ENCODE measurements at regions of chr12 and their contacts with region 1.

Region 1: GRCh38 chr12:7638760-7639555 is 26.8 kb downstream of the APOBEC1 start:
- DNase-seq: peak; percentile 24
- ATAC-seq: peak; percentile 88
- H3K4me3 Mint-ChIP-seq: peak overlapping the region; percentile 46
- H3K27ac Mint-ChIP-seq: peak overlapping the region; percentile 15
- H3K4me1 Mint-ChIP-seq: peaks cover 21% of the 10 kb centered on the region
- H3K27me3 Mint-ChIP-seq: peaks cover 24% of the 10 kb centered on the region
- CTCF ChIP-seq: peak; percentile 91

Region 2: GRCh38 chr12:6867413-6868210 is 771.3 kb before region 1 on chr12 and contains the start of gene TPI1:
- CTCF ChIA-PET with region 1: no interaction called
- POLR2A ChIA-PET with region 1: no interaction called
- intact Hi-C with region 1: loop called (anchors 2 kb)
- DNase-seq: peak; percentile 65
- ATAC-seq: peak; percentile 78
- H3K4me3 Mint-ChIP-seq: peak within 1 kb of the TSS; percentile 89
- H3K27ac Mint-ChIP-seq: peak within 1 kb of the TSS; percentile 84
- H3K4me1 Mint-ChIP-seq: peaks cover 51% of the 10 kb centered on the region
- H3K27me3 Mint-ChIP-seq: no peaks in the 10 kb centered on the region
- CTCF ChIP-seq: no peak
- total RNA-seq, gene TPI1: 306 and 318 TPM in 2 replicates

Region 3: DNA sequence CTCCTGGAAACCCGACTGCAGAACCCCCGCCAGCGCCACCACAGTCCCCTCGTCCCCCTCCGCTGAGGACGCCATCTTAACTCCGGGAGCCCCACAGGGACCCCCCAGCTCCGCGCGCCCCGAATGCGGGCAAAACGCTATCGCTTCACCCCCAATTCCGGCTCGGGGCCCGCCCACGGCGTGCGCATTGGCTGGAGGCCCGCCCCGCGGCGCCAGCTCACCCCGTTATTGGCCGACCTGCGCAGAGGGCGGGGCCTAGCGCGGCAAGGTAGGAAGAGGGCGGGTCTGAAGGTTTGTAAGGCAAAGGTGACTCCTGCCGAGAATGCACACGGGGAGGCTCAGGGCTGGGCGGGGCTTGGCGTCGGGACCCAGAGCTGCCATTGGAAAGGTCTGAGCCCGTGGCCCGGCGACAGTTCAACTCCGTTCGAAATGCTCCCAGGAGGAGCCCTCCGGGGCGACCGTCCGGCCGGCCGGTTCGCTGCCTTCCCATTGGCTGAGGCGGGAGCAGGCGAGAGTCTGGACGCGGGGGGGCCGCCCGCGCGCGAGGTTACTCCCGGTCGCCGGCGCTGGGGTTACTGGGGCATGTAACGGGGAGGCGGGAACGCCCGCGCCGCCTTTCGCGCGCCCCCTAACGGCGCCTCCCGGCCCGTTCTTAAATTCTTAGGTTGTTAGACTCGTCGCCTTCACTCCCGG is 620.5 kb before region 1 on chr12 and contains the start of gene LPCAT3:
- CTCF ChIA-PET with region 1: no interaction called
- POLR2A ChIA-PET with region 1: no interaction called
- intact Hi-C with region 1: loop called (anchors 5 kb)
- DNase-seq: peak; percentile 94
- ATAC-seq: peak; percentile 96
- H3K4me3 Mint-ChIP-seq: peak within 1 kb of the TSS; percentile 87
- H3K27ac Mint-ChIP-seq: peak within 1 kb of the TSS; percentile 77
- H3K4me1 Mint-ChIP-seq: peaks cover 20% of the 10 kb centered on the region
- H3K27me3 Mint-ChIP-seq: no peaks in the 10 kb centered on the region
- CTCF ChIP-seq: no peak
- total RNA-seq, gene LPCAT3: 19.3 and 21.3 TPM in 2 replicates

Region 4: GRCh38 chr12:7219599-7220243 is 419.2 kb before region 1 on chr12:
- CTCF ChIA-PET with region 1: interaction called, 16 read pairs
- POLR2A ChIA-PET with region 1: no interaction called
- intact Hi-C with region 1: loop called (anchors 1 kb)
- DNase-seq: peak; percentile 24
- ATAC-seq: peak; percentile 64
- H3K4me3 Mint-ChIP-seq: no peak overlapping the region
- H3K27ac Mint-ChIP-seq: no peak overlapping the region
- H3K4me1 Mint-ChIP-seq: no peaks in the 10 kb centered on the region
- H3K27me3 Mint-ChIP-seq: no peaks in the 10 kb centered on the region
- CTCF ChIP-seq: peak; percentile 90

Region 5: GRCh38 chr12:7460375-7461259 is 178.3 kb before region 1 on chr12:
- CTCF ChIA-PET with region 1: no interaction called
- POLR2A ChIA-PET with region 1: no interaction called
- intact Hi-C with region 1: loop called (anchors 5 kb)
- DNase-seq: no peak
- ATAC-seq: no peak
- H3K4me3 Mint-ChIP-seq: no peak overlapping the region
- H3K27ac Mint-ChIP-seq: no peak overlapping the region
- H3K4me1 Mint-ChIP-seq: no peaks in the 10 kb centered on the region
- H3K27me3 Mint-ChIP-seq: peaks cover 5% of the 10 kb centered on the region
- CTCF ChIP-seq: no peak

Region 6: DNA sequence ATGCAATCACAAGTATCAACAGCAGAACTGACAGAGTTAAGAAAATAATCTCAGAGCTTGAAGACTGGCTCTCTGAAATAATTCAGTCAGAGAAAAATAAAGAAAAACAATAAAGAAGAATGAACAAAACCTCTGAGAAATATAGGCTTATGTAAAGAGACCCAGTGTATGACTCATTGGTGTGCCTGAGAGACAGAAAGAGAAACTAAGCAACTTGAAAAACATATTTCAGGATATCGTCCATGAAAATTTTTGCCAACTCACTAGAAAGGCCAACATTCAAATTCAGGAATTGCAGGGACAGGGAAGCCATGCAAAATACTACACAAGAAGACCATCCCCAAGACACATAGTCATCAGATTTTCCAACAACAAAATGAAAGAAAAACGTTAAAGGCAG is 29.5 kb before region 1 on chr12:
- CTCF ChIA-PET with region 1: no interaction called
- POLR2A ChIA-PET with region 1: no interaction called
- intact Hi-C with region 1: no loop called
- DNase-seq: no peak
- ATAC-seq: no peak
- H3K4me3 Mint-ChIP-seq: no peak overlapping the region
- H3K27ac Mint-ChIP-seq: no peak overlapping the region
- H3K4me1 Mint-ChIP-seq: peaks cover 7% of the 10 kb centered on the region
- H3K27me3 Mint-ChIP-seq: peaks cover 23% of the 10 kb centered on the region
- CTCF ChIP-seq: no peak

Region 7: DNA sequence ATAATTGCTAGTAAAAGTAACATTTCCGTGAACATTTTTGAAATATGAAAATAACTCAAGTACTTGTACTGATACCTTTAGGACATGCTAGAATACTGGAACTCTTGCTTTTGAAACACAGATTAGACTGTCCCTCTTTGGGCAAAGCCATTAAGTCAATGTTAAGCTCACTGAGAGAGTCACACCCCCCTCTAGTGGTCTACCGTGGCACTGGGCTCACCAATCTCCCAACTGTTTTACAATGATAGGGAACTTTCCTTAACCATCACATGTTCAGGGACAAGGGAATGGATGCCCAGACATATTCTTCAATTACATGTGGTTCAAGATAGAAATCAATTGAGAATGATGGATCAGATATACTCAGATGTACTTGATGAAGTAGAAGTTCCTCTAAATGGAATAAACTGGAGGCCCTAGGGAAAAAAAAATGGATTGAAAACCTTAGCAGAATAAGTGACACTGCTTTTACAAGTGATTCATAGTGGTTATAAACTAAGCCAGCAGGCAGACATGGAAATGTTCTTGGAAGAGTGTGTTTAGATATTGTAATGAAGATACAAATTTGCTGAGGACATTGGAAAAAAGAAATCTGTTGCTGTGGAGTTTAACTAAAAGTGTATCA is 168.0 kb after region 1 on chr12:
- CTCF ChIA-PET with region 1: interaction called, 5 read pairs
- POLR2A ChIA-PET with region 1: no interaction called
- intact Hi-C with region 1: loop called (anchors 2 kb)
- DNase-seq: peak; percentile 25
- ATAC-seq: peak; percentile 56
- H3K4me3 Mint-ChIP-seq: no peak overlapping the region
- H3K27ac Mint-ChIP-seq: no peak overlapping the region
- H3K4me1 Mint-ChIP-seq: no peaks in the 10 kb centered on the region
- H3K27me3 Mint-ChIP-seq: peaks cover 3% of the 10 kb centered on the region
- CTCF ChIP-seq: peak; percentile 59

Measured in activated B cell treated with CpG ODN at 0.5 μM for 24 hours (primary cell).